ENCODE measurements at regions of chrX and their contacts with region 1.

Region 1: DNA sequence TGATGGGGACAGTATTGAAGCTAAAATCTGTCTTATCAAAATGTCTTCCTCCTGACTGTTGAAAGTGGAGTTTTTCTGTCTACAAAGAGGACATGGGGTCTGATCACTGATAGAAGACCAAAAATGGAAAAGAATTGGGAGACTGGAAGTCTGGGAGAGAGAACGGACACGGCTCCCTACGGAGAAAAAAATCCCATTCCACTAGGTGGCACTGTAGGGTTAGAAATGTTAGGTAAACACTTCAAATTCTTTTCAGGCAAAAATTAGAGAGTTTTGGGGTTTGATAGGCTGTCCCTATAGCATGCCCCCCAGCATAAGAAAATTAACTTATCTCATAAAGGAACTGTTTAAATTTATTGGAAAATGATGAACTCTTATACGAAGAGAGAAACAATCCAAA is 200.5 kb downstream of the FAM133A start:
- DNase-seq: no peak
- ATAC-seq: peak; percentile 47; the same call in 1 of the 3 replicates
- H3K4me3 ChIP-seq: no peak overlapping the region
- H3K27ac ChIP-seq: no peak overlapping the region
- H3K4me1 ChIP-seq: no peaks in the 10 kb centered on the region
- H3K27me3 ChIP-seq: no peaks in the 10 kb centered on the region
- CTCF ChIP-seq: peak; percentile 36 to 58 (median 53); a peak in 5 of 6 replicates
- EP300 ChIP-seq: no peak
- POLR2A ChIP-seq: no peak
- RAD21 ChIP-seq: peak; percentile 58

Region 2: DNA sequence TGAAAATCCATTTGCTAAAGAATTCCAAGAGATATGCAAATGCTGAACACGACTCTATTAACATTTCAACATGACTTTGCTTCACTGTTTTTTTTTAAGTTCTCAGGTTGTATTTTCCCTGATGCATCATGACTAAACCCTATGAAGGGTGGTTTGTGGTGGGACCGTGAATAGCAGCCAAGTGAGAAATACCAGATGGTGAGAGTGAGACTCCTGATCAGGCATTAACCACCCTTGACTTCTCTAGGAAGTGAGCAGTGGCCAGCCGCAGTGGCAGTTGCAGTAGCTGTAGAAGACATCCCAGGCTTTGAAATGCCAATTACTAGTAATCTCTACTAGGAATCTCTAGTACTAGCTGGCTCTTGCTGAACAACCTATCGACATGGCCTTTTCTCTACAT is 182.8 kb after region 1 on chrX:
- CTCF ChIA-PET with region 1: no interaction called
- POLR2A ChIA-PET with region 1: no interaction called
- RAD21 ChIA-PET with region 1: no interaction called
- SMC1A ChIA-PET with region 1: no interaction called
- in situ Hi-C with region 1: no loop called
- intact Hi-C with region 1: loop called (anchors 2 kb)
- DNase-seq: no peak
- ATAC-seq: 0 out of 3 replicates have a peak, but pooled peaks have one; percentile 26
- H3K4me3 ChIP-seq: no peak overlapping the region
- H3K27ac ChIP-seq: no peak overlapping the region
- H3K4me1 ChIP-seq: no peaks in the 10 kb centered on the region
- H3K27me3 ChIP-seq: no peaks in the 10 kb centered on the region
- CTCF ChIP-seq: no peak
- EP300 ChIP-seq: no peak
- POLR2A ChIP-seq: no peak
- RAD21 ChIP-seq: no peak

Region 3: GRCh38 chrX:94288325-94288724 is 413.8 kb after region 1 on chrX:
- CTCF ChIA-PET with region 1: no interaction called
- POLR2A ChIA-PET with region 1: no interaction called
- RAD21 ChIA-PET with region 1: no interaction called
- SMC1A ChIA-PET with region 1: no interaction called
- in situ Hi-C with region 1: no loop called
- intact Hi-C with region 1: loop called (anchors 10 kb)
- DNase-seq: no peak
- ATAC-seq: no peak
- H3K4me3 ChIP-seq: no peak overlapping the region
- H3K27ac ChIP-seq: no peak overlapping the region
- H3K4me1 ChIP-seq: no peaks in the 10 kb centered on the region
- H3K27me3 ChIP-seq: no peaks in the 10 kb centered on the region
- CTCF ChIP-seq: no peak
- EP300 ChIP-seq: no peak
- POLR2A ChIP-seq: no peak
- RAD21 ChIP-seq: 0 out of 2 replicates have a peak, but pooled peaks have one; percentile 14

Measured in GM12878 (cell line).